Activated CD8-positive, alpha-beta T cell treated with anti-CD3 and anti-CD28 coated beads for 36 hours (primary cell): ENCODE measurements at regions of chr12 and their contacts with region 1.

Region 1: GRCh38 chr12:6944381-6945186 is 762 bp downstream of the C12orf57 start:
- DNase-seq: peak; percentile 94
- ATAC-seq: peak; percentile 46
- H3K4me3 Mint-ChIP-seq: peak overlapping the region; percentile 85
- H3K27ac Mint-ChIP-seq: peak overlapping the region; percentile 93
- H3K4me1 Mint-ChIP-seq: peaks cover 57% of the 10 kb centered on the region
- H3K27me3 Mint-ChIP-seq: no peaks in the 10 kb centered on the region
- CTCF ChIP-seq: peak; percentile 88

Region 2: GRCh38 chr12:6851921-6852650 is 92.5 kb before region 1 on chr12 and contains the start of gene USP5:
- CTCF ChIA-PET with region 1: no interaction called
- POLR2A ChIA-PET with region 1: interaction called, 20 read pairs
- intact Hi-C with region 1: no loop called
- DNase-seq: peak; percentile 99
- ATAC-seq: peak; percentile 79
- H3K4me3 Mint-ChIP-seq: peak within 1 kb of the TSS; percentile 86
- H3K27ac Mint-ChIP-seq: peak within 1 kb of the TSS; percentile 98
- H3K4me1 Mint-ChIP-seq: peaks cover 29% of the 10 kb centered on the region
- H3K27me3 Mint-ChIP-seq: no peaks in the 10 kb centered on the region
- CTCF ChIP-seq: no peak
- total RNA-seq, gene USP5: 109 to 112 TPM

Region 3: GRCh38 chr12:6873094-6874014 is 71.2 kb before region 1 on chr12 and contains the start of gene SPSB2:
- CTCF ChIA-PET with region 1: interaction called, 26 read pairs
- POLR2A ChIA-PET with region 1: interaction called, 32 read pairs
- intact Hi-C with region 1: no loop called
- DNase-seq: peak; percentile 99
- ATAC-seq: peak; percentile 82
- H3K4me3 Mint-ChIP-seq: peak within 1 kb of the TSS; percentile 91
- H3K27ac Mint-ChIP-seq: peak within 1 kb of the TSS; percentile 89
- H3K4me1 Mint-ChIP-seq: peaks cover 45% of the 10 kb centered on the region
- H3K27me3 Mint-ChIP-seq: no peaks in the 10 kb centered on the region
- CTCF ChIP-seq: no peak
- total RNA-seq, gene SPSB2: 2.2 to 2.6 TPM

Region 4: DNA sequence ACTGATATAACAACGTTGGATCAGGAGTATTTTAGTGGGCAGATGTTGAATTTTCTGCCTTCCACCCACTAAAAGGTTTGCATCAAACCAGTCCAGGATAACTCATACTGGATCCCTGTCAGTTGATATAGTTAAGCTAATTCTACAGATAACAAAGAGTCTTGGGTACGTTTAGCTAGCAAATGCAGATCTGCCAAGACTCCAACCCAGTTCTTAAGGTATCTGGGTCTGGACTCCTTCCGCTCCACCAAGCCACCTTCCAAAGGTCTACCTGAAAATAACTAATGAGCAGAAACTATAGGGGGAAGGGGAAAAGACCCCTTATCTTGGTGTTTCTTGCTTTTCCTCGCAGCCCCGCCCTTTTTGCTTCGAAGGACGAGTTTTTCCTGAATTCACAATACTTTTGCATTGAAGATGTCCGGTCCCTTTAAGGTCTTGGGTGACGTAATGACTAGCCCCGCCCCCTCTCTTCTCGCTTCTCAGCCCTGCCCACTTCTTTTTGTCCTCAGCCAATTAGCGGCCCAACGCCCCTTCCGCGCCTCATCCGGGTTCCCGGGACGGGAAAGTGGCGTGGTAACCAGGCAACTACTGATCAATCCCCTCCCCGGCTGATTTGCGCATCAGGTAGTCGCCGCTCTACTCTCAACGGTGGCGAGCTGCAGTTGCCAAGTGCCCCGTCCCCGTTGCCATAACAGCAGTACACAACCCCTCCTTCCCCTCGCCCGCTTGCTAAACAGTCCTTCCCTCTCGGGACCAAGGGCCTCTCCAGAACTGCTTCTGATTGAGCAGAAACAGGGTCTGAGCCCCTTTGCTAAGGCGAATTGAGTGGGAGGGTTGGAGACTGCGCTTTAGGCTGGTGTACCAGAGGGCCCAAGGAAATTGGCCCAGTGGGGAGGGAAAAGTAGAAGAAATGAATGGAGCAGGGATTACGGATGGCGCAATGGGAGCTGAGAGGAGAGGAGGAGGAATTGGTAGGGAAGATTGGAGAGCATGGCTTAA is 40.0 kb before region 1 on chr12 and contains the start of gene LRRC23:
- CTCF ChIA-PET with region 1: no interaction called
- POLR2A ChIA-PET with region 1: interaction called, 23 read pairs
- intact Hi-C with region 1: no loop called
- DNase-seq: peak; percentile 100
- ATAC-seq: peak; percentile 96
- H3K4me3 Mint-ChIP-seq: no peak within 1 kb of the TSS
- H3K27ac Mint-ChIP-seq: no peak within 1 kb of the TSS
- H3K4me1 Mint-ChIP-seq: peaks cover 10% of the 10 kb centered on the region
- H3K27me3 Mint-ChIP-seq: no peaks in the 10 kb centered on the region
- CTCF ChIP-seq: no peak
- total RNA-seq, gene LRRC23: 4.6 to 5.3 TPM

Region 5: GRCh38 chr12:6927379-6928024 is 17.1 kb before region 1 on chr12 and contains the start of gene ATN1:
- CTCF ChIA-PET with region 1: interaction called, 108 read pairs
- POLR2A ChIA-PET with region 1: interaction called, 1,266 read pairs
- intact Hi-C with region 1: no loop called
- DNase-seq: peak; percentile 55
- ATAC-seq: peak; percentile 32
- H3K4me3 Mint-ChIP-seq: peak within 1 kb of the TSS; percentile 78
- H3K27ac Mint-ChIP-seq: peak within 1 kb of the TSS; percentile 82
- H3K4me1 Mint-ChIP-seq: peaks cover 59% of the 10 kb centered on the region
- H3K27me3 Mint-ChIP-seq: no peaks in the 10 kb centered on the region
- CTCF ChIP-seq: no peak
- total RNA-seq, gene ATN1: 26.4 to 28.5 TPM

Region 6: DNA sequence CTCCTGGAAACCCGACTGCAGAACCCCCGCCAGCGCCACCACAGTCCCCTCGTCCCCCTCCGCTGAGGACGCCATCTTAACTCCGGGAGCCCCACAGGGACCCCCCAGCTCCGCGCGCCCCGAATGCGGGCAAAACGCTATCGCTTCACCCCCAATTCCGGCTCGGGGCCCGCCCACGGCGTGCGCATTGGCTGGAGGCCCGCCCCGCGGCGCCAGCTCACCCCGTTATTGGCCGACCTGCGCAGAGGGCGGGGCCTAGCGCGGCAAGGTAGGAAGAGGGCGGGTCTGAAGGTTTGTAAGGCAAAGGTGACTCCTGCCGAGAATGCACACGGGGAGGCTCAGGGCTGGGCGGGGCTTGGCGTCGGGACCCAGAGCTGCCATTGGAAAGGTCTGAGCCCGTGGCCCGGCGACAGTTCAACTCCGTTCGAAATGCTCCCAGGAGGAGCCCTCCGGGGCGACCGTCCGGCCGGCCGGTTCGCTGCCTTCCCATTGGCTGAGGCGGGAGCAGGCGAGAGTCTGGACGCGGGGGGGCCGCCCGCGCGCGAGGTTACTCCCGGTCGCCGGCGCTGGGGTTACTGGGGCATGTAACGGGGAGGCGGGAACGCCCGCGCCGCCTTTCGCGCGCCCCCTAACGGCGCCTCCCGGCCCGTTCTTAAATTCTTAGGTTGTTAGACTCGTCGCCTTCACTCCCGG is 73.9 kb after region 1 on chr12 and contains the start of gene LPCAT3:
- CTCF ChIA-PET with region 1: interaction called, 18 read pairs
- POLR2A ChIA-PET with region 1: interaction called, 17 read pairs
- intact Hi-C with region 1: loop called (anchors 2 kb)
- DNase-seq: peak; percentile 98
- ATAC-seq: peak; percentile 97
- H3K4me3 Mint-ChIP-seq: peak within 1 kb of the TSS; percentile 96
- H3K27ac Mint-ChIP-seq: peak within 1 kb of the TSS; percentile 91
- H3K4me1 Mint-ChIP-seq: peaks cover 32% of the 10 kb centered on the region
- H3K27me3 Mint-ChIP-seq: no peaks in the 10 kb centered on the region
- CTCF ChIP-seq: peak; percentile 87
- total RNA-seq, gene LPCAT3: 17.3 to 18.1 TPM

Region 7: DNA sequence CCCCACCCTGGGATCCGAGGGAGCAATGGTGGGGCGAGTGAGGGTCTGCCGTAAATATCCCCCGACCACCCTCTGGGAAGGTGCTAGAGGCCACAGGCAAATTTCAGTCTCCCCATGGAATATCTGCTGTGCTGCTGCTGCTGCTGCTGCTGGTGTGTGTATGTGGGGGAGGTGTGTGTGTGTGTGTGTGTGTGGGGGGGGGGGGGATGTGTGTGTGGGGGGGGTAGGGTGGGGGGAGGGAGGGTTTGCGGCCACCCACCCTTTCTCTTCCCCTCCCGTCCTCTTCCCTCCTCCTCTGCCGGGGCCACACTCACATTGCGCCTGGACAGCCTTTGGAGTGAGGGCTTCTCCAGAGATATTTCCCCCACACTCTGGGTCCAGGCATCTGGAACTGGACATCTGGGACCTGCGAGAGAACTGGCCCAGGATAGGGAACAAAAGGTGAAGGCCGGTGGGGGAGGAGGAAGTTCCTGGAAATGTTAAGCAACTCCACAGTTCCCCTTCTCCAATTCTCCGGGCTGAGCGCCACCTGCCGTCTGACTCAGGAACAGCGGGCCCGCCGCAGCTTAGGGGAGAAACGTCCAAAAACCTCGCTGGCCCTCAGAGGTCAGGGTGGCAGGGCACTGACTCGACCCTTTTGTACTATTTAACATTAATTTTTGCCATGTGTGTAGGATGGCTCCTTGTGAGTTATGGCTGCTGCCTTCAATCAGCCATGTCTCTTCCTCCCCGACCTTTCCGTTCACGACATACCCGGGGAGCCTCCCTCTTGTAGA is 164.4 kb after region 1 on chr12 and contains the start of gene C1RL:
- CTCF ChIA-PET with region 1: interaction called, 32 read pairs
- POLR2A ChIA-PET with region 1: interaction called, 36 read pairs
- intact Hi-C with region 1: loop called (anchors 10 kb)
- DNase-seq: peak; percentile 87
- ATAC-seq: peak; percentile 47
- H3K4me3 Mint-ChIP-seq: peak within 1 kb of the TSS; percentile 88
- H3K27ac Mint-ChIP-seq: peak within 1 kb of the TSS; percentile 93
- H3K4me1 Mint-ChIP-seq: peaks cover 36% of the 10 kb centered on the region
- H3K27me3 Mint-ChIP-seq: no peaks in the 10 kb centered on the region
- CTCF ChIP-seq: peak; percentile 97
- total RNA-seq, gene C1RL: 10.5 to 11.8 TPM